ENCODE measurements at regions of chr14 and their contacts with region 1.

Region 1: GRCh38 chr14:91114079-91115065 is 499 bp downstream of the DGLUCY start:
- DNase-seq: no peak
- H3K4me3 ChIP-seq: peak overlapping the region; percentile 73
- H3K27ac ChIP-seq: peak overlapping the region; percentile 61
- H3K27me3 ChIP-seq: no peaks in the 10 kb centered on the region
- CTCF ChIP-seq: no peak

Region 2: GRCh38 chr14:91149479-91149921 is 35.1 kb after region 1 on chr14:
- CTCF ChIA-PET with region 1: no interaction called
- POLR2A ChIA-PET with region 1: interaction called, 10 read pairs
- DNase-seq: peak; percentile 99
- H3K4me3 ChIP-seq: no peak overlapping the region
- H3K27ac ChIP-seq: peak overlapping the region; percentile 65
- H3K27me3 ChIP-seq: peaks cover 7% of the 10 kb centered on the region
- CTCF ChIP-seq: no peak